H1 (cell line): ENCODE measurements at regions of chr15 and their contacts with region 1.

Region 1: DNA sequence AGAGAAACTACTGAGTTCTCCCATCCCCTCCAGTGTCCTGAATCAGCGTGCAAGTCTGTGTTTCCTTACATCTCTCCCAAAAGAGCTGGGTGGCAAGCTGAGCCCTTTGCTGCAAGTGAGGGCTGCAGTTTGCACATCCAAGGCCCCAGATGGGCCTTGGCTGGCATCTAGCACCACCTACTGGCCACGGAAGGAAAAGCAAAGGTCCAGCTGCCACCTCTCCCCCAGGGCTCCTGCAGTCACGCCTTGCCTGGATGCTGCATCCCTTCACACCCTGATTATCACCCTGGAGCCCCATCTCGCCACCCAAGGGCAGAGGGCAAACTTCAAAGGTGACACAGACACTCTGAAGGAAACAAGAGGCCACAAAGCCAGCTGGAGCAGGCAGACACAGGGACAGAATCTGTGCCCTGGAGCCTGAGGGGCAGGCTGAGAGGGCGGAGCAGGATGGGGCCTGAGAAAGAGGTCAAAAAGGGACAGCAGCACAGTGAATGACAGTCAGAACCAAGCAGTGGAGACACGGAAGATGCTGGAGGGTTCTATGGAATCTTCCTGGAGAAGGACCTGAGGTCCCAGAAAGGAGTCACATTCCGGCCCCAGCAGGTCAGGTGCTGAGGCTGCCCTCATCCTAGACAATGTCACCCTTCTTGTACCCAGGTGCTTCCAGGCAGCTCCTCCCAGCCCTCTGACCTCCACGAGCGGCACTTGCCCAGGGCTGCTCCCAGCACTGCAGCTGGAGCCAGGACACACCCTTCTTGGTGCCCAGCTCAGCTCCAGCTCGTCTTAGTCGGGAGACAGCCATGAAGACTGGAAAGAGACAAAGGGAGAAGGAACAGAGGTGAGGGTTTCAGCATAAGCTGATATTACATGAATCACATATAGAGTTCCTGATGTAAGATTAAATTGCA is 18.3 kb upstream of the NTRK3 start:
- DNase-seq: peak; percentile 60 to 89
- H3K4me3 ChIP-seq: no peak overlapping the region
- H3K27ac ChIP-seq: no peak overlapping the region
- H3K4me1 ChIP-seq: no peaks in the 10 kb centered on the region
- H3K27me3 ChIP-seq: peaks cover 0 to 6% (median under 1%) of the 10 kb centered on the region in 4 experiments; a peak in 1 of 7 replicates
- CTCF ChIP-seq: peak; percentile 92 to 97 (median 94)
- EP300 ChIP-seq: no peak
- POLR2A ChIP-seq: no peak
- RAD21 ChIP-seq: peak; percentile 91 to 92

Region 2: DNA sequence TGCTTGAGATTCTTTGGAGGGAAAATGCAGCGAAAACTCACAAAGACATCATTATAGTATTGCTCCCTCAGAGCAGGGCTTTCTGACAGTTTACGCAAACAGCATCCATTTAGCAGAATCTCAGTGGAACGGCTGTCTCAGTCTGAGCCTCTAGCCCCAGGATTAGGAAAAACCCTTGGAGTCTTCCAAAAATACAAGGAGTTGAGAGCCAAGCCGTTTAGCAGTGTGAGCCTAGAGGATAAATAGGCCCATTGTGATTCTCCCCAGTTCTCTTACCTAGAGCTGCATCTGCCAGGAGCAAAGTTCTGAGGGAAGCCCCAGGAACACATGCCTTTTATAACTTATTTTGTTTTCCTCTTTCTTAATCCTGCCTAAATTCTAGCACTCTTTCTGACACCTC is 377.9 kb before region 1 on chr15:
- CTCF ChIA-PET with region 1: no interaction called
- POLR2A ChIA-PET with region 1: no interaction called
- DNase-seq: no peak
- H3K4me3 ChIP-seq: no peak overlapping the region
- H3K27ac ChIP-seq: no peak overlapping the region
- H3K4me1 ChIP-seq: no peaks in the 10 kb centered on the region
- H3K27me3 ChIP-seq: no peaks in the 10 kb centered on the region
- CTCF ChIP-seq: no peak
- EP300 ChIP-seq: no peak
- POLR2A ChIP-seq: no peak
- RAD21 ChIP-seq: no peak

Region 3: GRCh38 chr15:88241060-88241459 is 33.7 kb before region 1 on chr15:
- CTCF ChIA-PET with region 1: interaction called, 144 read pairs
- POLR2A ChIA-PET with region 1: no interaction called
- DNase-seq: no peak
- H3K4me3 ChIP-seq: no peak overlapping the region
- H3K27ac ChIP-seq: no peak overlapping the region
- H3K4me1 ChIP-seq: peaks cover 0 to 4% (median 0%) of the 10 kb centered on the region in 4 experiments; a peak in 1 of 7 replicates
- H3K27me3 ChIP-seq: no peaks in the 10 kb centered on the region; a peak in 1 of 7 replicates
- CTCF ChIP-seq: peak; percentile 38 to 67 (median 43)
- EP300 ChIP-seq: no peak
- POLR2A ChIP-seq: no peak
- RAD21 ChIP-seq: peak in 1 of 2 experiments; percentile 31; a peak in 2 of 4 replicates

Region 4: GRCh38 chr15:88258093-88258641 is 16.6 kb before region 1 on chr15:
- CTCF ChIA-PET with region 1: interaction called, 119 read pairs
- POLR2A ChIA-PET with region 1: interaction called, 4 read pairs
- DNase-seq: peak; percentile 44 to 89
- H3K4me3 ChIP-seq: peak overlapping the region; percentile 70 to 91 (median 82)
- H3K27ac ChIP-seq: no peak overlapping the region
- H3K4me1 ChIP-seq: peaks cover 0 to 9% (median 3%) of the 10 kb centered on the region in 4 experiments; a peak in 6 of 7 replicates
- H3K27me3 ChIP-seq: peaks cover 21 to 39% (median 32%) of the 10 kb centered on the region in 4 experiments
- CTCF ChIP-seq: peak; percentile 70 to 92 (median 84)
- EP300 ChIP-seq: no peak
- POLR2A ChIP-seq: no peak
- RAD21 ChIP-seq: peak; percentile 47 to 64

Region 5: DNA sequence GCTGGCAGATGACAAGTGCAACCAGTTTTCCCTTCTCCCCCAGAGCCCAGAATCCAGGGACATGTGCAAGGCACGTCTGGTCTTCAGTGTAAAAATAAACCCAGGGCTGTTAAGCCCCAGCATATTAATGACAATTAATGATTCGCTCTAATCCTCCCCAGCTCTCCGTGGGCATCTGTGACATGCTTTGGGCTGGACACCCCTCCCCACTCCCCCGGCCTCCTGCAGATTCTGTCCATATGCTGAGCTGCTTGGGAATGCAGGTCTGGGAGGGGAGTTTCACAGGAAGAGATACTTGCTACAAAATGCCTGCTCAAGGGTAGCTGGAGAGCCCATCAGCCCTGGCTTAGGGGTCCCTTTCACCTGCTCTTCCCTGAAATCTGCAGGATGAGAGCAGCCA is 24.7 kb after region 1 on chr15:
- CTCF ChIA-PET with region 1: interaction called, 43 read pairs
- POLR2A ChIA-PET with region 1: no interaction called
- DNase-seq: no peak
- H3K4me3 ChIP-seq: no peak overlapping the region
- H3K27ac ChIP-seq: no peak overlapping the region
- H3K4me1 ChIP-seq: peaks cover 6 to 18% (median 9%) of the 10 kb centered on the region in 4 experiments
- H3K27me3 ChIP-seq: no peaks in the 10 kb centered on the region
- CTCF ChIP-seq: no peak
- EP300 ChIP-seq: no peak
- POLR2A ChIP-seq: no peak
- RAD21 ChIP-seq: no peak

Region 6: DNA sequence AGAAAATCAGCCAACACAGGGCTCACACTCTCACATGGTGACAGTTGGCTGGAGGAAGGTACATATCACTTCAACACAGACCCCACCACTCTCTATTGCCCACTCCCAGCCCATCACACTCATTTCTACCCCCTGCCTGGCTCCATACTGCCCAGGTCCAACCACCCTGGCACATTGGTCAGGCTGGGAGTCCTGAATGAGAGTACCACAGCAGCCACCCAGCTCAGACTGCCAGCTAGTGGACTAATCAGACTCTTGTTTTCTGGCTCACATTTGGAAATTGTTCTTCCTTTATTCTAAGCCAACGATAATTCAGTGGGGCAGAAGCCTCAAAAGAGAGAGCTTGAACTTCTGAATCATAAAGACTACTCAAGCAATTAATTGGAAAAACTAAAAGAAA is 172.4 kb after region 1 on chr15:
- CTCF ChIA-PET with region 1: interaction called, 38 read pairs
- POLR2A ChIA-PET with region 1: no interaction called
- DNase-seq: no peak
- H3K4me3 ChIP-seq: no peak overlapping the region
- H3K27ac ChIP-seq: no peak overlapping the region
- H3K4me1 ChIP-seq: no peaks in the 10 kb centered on the region
- H3K27me3 ChIP-seq: peaks cover 0 to 10% (median 5%) of the 10 kb centered on the region in 4 experiments; a peak in 4 of 7 replicates
- CTCF ChIP-seq: no peak
- EP300 ChIP-seq: no peak
- POLR2A ChIP-seq: no peak
- RAD21 ChIP-seq: no peak